PC-9 (cell line): ENCODE measurements at regions of chr17 and their contacts with region 1.

Region 1: GRCh38 chr17:72338847-72339790 is 218.3 kb downstream of the SOX9 start:
- DNase-seq: peak; percentile 81 to 97
- H3K4me3 ChIP-seq: no peak overlapping the region; the same call in 1 of the 2 replicates
- H3K27ac ChIP-seq: peak overlapping the region; percentile 88
- H3K4me1 ChIP-seq: peaks cover 34% of the 10 kb centered on the region
- H3K27me3 ChIP-seq: no peaks in the 10 kb centered on the region
- CTCF ChIP-seq: no peak

Region 2: DNA sequence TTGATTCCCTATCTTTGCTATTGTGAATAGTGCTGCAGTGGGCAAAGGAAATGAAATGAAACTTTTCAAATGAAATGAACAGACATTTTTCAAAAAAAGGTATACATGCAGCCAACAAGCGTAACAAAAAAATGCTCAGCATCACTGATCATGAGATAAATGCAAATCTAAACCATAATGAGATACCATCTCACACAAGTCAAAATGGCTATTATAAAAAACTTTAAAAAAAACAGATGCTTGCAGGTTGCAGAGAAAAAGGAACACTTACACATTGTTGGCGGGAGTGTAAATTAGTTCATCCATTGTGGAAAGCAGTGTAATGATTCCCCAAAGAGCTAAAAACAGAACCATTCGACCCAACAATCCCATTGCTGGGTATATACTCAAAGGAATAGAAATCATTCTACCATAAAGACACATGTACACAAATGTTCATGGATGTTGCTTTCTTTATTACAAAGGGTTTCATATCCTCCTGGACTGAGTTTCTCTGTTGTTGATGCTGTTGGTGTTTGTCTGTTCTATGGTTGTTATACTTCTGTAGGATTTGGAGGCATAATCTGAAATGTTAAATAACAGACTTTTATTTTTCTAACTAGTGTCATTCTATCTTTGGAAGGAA is 317.6 kb before region 1 on chr17:
- CTCF ChIA-PET with region 1: no interaction called
- POLR2A ChIA-PET with region 1: no interaction called
- intact Hi-C with region 1: no loop called
- DNase-seq: no peak
- H3K4me3 ChIP-seq: no peak overlapping the region
- H3K27ac ChIP-seq: no peak overlapping the region
- H3K4me1 ChIP-seq: no peaks in the 10 kb centered on the region
- H3K27me3 ChIP-seq: no peaks in the 10 kb centered on the region
- CTCF ChIP-seq: no peak

Region 3: DNA sequence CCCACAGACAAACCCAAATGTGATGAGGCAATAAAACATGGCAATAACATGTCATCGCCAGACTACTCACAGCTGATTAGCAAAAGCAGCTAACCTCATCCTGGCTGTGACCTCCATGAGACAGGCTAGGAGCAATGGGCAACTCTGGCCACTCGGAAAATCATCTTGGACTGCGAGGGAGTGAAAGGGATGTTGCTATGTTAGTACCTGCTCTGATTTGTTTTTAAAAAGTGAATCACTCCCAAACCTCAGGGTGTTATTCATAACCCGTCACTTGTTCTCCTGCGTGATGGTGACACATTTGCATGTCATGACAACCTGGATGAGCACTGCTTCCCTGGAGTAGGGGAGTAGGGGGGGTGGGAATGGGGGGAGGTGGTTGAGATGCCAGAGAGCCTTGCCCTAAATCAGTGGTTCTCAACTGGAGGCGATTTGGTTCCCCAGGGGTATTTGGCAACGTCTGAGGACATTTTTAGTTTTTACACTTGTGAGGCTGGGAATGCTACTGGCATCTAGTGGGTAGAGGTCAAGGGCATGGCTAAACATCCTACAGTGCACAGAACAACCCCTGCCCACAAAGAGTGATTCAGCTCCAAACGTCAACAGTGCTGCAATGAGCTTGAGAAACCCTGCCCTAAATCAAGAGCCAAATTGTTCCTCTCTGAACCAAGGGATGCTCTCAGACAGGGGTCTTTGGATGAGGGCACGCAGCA is 23.4 kb after region 1 on chr17:
- CTCF ChIA-PET with region 1: no interaction called
- POLR2A ChIA-PET with region 1: interaction called, 4 read pairs
- intact Hi-C with region 1: loop called (anchors 1 kb)
- DNase-seq: peak in 1 of 2 experiments; percentile 79
- H3K4me3 ChIP-seq: no peak overlapping the region
- H3K27ac ChIP-seq: peak overlapping the region; percentile 41
- H3K4me1 ChIP-seq: peaks cover 44% of the 10 kb centered on the region
- H3K27me3 ChIP-seq: no peaks in the 10 kb centered on the region
- CTCF ChIP-seq: no peak

Region 4: GRCh38 chr17:72373910-72374741 is 35.0 kb after region 1 on chr17:
- CTCF ChIA-PET with region 1: no interaction called
- POLR2A ChIA-PET with region 1: no interaction called
- intact Hi-C with region 1: no loop called
- DNase-seq: no peak
- H3K4me3 ChIP-seq: no peak overlapping the region
- H3K27ac ChIP-seq: no peak overlapping the region
- H3K4me1 ChIP-seq: peaks cover 5% of the 10 kb centered on the region; the same call in 1 of the 2 replicates
- H3K27me3 ChIP-seq: no peaks in the 10 kb centered on the region
- CTCF ChIP-seq: no peak

Region 5: DNA sequence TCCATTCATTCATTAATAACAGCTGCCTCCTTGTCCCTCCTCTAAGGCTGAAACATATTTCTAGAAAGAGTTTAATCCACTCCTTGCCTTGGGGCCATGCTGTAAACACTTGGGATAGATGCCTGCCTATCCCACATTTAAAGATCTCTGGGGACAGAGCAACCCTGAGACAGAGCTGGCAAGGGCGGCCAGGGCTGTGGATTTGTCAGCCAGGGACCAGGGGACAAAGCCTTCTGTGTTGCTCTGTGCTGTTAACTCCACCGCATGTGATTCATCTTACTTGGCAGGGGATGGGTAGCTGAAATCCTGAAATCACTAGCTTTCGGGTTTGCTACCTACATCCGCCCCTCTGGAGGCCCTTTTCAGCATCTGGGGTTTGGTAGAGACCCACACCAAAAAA is 360.4 kb after region 1 on chr17:
- CTCF ChIA-PET with region 1: no interaction called
- POLR2A ChIA-PET with region 1: no interaction called
- intact Hi-C with region 1: no loop called
- DNase-seq: no peak
- H3K4me3 ChIP-seq: no peak overlapping the region
- H3K27ac ChIP-seq: no peak overlapping the region
- H3K4me1 ChIP-seq: no peaks in the 10 kb centered on the region
- H3K27me3 ChIP-seq: no peaks in the 10 kb centered on the region
- CTCF ChIP-seq: no peak